ENCODE measurements at regions of chr1 and their contacts with region 1.

Region 1: DNA sequence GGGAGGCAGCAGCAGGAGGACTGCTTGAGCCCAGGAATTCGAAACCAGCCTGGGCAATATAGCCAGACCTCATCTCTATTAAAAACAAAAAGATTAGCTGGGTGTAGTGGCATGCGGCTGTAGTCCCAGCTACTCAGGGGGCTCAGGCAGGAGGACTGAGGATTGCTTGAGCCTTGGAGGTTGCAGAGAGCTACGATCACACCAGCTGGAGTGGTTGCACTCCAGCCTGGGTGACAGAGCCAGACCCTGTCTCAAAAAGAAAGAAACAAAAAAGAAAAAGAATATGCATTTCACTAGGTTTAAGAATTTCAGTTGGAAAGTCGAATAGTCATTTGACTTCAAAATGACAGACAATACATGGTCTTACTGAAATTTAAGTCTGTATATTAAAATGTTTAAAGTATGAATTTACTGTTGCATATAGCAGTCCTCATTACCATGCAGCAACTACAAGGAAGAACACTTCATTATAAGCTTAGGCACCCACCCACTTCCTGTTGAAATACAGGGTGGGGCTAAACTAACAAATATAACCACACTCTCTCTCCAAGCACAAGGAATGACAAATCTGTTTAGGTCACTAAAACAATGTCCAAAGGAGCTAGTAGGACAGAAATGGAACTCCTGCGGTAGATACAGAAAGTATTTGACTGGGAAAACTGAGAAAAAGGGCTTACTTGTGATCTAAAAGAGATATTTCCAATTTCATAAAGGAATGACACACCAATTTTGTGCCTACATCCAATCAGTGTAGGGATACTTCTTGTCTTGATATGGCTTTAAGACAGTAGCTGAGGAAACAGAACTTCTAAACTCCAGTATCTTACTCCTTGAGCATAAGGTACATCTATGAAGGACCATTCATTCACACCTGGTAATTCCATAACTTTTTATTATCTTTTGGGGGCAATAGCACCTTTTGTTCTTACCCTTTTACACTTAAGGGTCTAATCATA is 44.1 kb downstream of the GPR3 start:
- DNase-seq: no peak

Region 2: GRCh38 chr1:26856604-26857469 is 579.6 kb before region 1 on chr1:
- CTCF ChIA-PET with region 1: interaction called, 10 read pairs
- POLR2A ChIA-PET with region 1: no interaction called
- DNase-seq: no peak